ENCODE measurements at regions of chr13 and their contacts with region 1.

Region 1: DNA sequence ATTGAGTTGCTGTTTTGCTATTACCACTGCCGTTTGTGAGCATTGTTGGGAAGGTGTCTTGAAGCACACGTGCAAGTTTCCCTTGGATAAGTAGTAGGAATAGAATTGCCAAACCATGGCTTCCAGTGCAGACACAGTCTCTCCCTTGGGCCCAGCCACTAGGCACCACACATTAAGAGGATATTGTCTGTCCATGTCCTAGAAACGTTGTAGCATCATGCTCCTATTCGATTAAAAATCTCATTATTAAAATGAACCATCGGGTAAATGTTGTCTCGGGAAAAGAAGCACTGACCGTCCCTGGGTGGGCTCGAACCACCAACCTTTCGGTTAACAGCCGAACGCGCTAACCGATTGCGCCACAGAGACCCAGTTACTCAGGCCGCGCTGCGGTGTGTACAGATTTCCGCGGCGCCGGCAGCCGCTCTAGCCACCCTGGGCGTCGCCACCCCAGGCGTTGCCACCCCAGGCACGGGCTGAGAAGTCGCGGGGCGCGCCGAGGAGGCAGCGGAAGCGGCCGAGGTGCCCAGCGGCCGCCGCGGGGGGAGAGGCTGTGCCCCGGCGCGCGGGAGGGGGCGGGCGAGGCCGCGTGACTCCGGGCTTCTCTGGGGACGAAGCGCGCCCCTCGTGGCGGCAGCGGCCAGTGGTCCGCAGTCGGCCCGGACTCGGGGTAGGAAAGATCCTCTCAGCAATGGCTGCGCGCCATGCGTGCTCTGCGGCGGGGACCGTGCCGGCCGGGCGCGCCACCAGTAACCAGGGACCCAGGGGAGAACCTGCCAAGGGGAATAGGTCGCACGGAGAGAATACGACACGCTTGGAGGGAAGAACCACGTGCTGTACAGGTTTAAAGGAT is 56.2 kb downstream of the USPL1 start:
- DNase-seq: peak; percentile 92 to 95
- ATAC-seq: peak; percentile 90 to 98 (median 97)
- H3K4me3 ChIP-seq: peak overlapping the region; percentile 71
- H3K27ac ChIP-seq: peak overlapping the region; percentile 80
- H3K4me1 ChIP-seq: no peaks in the 10 kb centered on the region
- H3K27me3 ChIP-seq: no peaks in the 10 kb centered on the region
- CTCF ChIP-seq: peak; percentile 79

Region 2: DNA sequence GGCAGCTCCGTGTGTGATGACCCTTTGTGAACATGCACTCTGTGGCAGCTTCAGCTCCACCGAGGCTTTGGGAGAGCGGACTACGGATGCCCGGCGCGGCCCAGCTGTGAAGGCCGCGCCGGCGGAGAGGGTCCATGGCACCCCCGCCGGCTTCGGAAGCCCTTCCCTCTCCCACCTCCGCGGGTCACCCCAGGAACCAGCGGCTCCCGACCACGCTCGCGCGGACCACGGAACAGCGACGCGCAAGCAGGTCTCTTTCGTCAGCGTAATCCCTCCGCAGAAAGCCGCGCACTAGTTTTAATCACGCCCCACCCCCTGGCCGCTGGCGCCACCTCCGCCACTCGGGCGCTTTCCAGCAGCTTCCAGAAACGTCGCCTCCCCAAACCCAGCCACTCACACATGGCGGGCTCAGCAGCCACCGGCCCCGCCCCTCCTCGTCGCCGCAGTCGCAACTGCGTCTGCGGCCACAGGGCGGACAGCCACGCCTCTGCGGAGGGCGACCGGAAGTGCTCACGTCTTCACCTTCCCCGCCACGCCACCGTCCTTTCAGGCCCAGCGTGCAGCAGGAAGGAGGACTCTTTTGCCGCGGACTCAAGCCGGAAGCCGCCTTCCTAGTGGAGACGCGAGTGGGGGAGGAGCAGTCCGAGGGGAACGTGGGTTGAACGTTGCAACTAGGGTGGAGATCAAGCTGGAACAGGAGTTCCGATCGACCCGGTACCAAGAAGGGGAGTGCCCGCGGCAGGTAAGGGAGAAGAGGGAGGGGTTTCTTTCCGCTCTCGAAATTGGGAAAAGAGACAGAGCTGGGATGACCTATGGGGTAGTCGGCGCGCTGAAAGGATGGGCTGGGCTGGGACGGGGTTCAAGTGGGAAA is 56.3 kb before region 1 on chr13 and contains the start of gene USPL1:
- intact Hi-C with region 1: loop called in 1 of 2 experiments (anchors 5 kb)
- DNase-seq: peak; percentile 99
- ATAC-seq: peak; percentile 92 to 97 (median 94)
- H3K4me3 ChIP-seq: peak within 1 kb of the TSS; percentile 88
- H3K27ac ChIP-seq: peak within 1 kb of the TSS; percentile 98
- H3K4me1 ChIP-seq: peaks cover 30% of the 10 kb centered on the region
- H3K27me3 ChIP-seq: no peaks in the 10 kb centered on the region
- CTCF ChIP-seq: peak; percentile 25
- total RNA-seq, gene USPL1: 11.2 to 18.4 (median 13.1) TPM

Region 3: DNA sequence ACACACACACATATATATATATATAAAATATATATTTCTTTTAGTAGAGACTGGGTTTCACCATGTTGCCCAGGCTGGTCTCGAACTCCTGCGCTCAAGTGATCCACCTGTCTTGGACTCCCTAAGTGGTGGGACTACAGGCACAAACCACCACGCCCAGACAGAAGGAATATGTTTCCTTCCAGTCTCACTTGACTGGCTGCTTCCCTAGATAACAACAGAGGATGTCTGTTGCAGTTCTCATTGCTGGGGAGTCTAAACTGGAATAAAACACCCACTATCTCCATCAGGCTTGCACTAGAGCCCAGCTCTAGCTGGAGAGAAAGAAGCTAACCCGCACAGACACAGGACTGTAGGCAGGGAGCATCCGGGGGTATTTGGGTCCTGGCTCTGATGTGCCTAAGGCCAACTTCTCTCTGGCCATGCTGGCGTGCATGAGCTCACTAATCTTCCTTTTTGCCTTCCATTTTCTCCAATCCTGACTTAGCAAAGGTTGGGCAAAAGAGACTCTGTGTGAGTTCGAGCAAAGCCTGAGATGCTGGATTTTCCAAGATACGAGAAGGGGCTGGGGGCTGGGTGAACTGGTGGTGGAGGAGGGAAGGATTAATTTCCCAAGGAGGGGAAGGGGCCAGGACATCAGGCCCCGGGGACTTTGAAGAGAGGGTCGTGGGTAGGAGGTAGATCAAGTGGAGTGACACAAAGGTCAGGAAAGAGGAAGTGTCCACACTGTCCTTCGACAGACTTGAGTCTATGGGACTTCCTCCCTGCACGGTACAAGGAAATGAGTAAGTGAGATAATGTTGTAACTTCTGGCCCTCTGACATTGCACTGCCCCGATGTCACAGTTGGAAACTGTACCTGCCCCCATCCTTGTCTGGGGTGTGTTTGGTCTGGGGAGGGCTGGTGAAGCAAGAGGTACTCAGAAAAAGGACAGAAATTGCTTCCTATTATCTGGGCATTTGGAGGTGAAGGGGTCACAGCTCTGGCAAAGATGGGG is 38.9 kb after region 1 on chr13:
- intact Hi-C with region 1: no loop called
- DNase-seq: peak in 1 of 2 donors; percentile 23
- ATAC-seq: peak; percentile 34 to 70 (median 64)
- H3K4me3 ChIP-seq: no peak overlapping the region
- H3K27ac ChIP-seq: no peak overlapping the region
- H3K4me1 ChIP-seq: no peaks in the 10 kb centered on the region
- H3K27me3 ChIP-seq: no peaks in the 10 kb centered on the region
- CTCF ChIP-seq: no peak

Region 4: DNA sequence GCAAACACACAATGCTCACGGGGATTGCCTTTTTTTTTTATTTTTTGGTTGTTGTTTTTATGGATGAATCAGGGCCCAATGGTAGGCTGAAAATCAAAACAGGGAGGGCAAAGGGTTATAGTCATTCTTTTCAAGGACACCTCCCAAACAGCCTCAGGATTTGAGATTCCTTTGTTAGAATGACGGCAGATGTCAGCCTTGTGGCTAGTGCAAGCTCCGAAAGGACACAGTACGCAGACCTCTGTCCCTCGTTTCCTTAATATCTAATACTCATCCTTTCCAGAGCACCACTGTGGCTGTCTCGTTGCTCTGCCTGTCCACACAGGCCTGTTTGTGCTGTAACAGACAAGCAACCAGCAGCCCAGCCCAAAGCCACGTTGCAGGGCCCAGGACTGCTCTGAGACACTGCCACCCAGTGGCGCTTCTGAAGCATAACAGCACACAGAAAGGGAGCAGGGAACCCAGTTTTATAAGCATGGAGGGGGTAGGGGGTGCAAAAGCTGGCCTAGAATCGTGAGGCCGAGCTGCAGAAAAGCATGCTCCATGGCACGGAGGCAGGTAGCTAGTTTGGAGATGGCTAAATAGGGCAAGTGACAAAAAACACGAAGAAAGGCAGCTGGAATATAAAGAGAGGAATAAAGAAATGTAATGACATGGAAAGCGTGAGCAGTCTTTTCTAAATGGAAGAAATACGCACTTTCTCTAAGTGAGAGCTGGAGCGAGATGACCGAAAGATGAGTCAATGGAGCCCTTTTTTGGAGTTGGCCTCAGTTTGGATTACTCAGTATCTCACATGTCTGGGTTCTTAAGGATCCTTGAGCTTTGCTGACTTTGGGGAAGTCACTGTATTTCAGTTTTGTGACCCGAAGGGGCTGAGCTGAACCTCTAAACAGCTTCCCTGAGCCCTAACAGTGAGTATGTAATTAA is 191.5 kb after region 1 on chr13:
- intact Hi-C with region 1: loop called (anchors 2 to 10 kb)
- DNase-seq: peak; percentile 79 to 87
- ATAC-seq: peak; percentile 76 to 80 (median 78)
- H3K4me3 ChIP-seq: no peak overlapping the region
- H3K27ac ChIP-seq: peak overlapping the region; percentile 70
- H3K4me1 ChIP-seq: peaks cover 31% of the 10 kb centered on the region
- H3K27me3 ChIP-seq: no peaks in the 10 kb centered on the region
- CTCF ChIP-seq: peak; percentile 90

Region 5: DNA sequence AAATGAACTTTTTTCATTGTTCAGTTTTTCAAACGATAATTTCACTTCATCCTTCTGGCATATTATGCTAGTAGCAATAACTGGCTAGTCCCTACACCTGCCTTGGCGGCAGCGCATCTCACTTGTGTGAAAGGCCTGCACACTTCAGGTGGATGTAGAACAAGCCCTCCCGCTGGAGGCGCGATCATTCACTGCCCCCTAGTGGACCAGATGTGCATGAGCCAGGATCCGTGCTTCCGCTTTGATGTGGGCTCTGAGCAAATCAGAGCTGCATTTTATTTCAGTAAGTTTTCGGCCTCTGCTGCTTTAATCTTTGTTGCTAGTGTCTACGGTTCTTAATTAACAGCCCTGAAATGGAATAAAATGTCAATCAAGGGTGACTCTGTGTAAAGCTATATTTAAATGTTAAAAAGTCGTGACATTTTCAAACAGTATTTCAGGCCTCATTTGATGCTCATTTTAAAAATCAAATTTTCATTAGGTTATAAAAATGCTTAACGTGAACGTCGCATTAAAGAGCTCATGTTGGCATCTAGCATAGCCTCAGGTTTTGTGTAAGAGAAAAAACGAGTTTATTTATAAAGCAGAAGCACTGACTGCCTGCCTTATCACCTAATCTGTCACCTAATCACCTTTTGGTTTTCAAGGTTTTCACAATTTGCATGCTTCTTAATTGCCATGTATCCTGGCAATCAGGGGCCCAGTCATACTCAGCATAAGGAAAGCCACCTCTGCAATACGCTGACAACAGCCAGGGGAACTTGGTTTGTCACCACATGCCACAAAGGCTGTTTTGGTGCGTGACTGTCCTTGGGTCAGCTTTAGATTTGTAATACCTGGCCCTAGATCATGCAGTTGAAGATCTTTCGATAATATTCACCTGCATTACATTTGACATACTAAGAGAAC is 370.7 kb after region 1 on chr13:
- intact Hi-C with region 1: loop called in 1 of 2 experiments (anchors 10 kb)
- DNase-seq: peak; percentile 74 to 81
- ATAC-seq: peak; percentile 85 to 93 (median 87)
- H3K4me3 ChIP-seq: no peak overlapping the region
- H3K27ac ChIP-seq: no peak overlapping the region
- H3K4me1 ChIP-seq: peaks cover 11% of the 10 kb centered on the region
- H3K27me3 ChIP-seq: peaks cover 0 to 2% (median 0%) of the 10 kb centered on the region in 3 donors
- CTCF ChIP-seq: peak; percentile 93

Measured in psoas muscle (tissue), 8 donors.